ENCODE measurements at regions of chr2 and their contacts with region 1.

Region 1: DNA sequence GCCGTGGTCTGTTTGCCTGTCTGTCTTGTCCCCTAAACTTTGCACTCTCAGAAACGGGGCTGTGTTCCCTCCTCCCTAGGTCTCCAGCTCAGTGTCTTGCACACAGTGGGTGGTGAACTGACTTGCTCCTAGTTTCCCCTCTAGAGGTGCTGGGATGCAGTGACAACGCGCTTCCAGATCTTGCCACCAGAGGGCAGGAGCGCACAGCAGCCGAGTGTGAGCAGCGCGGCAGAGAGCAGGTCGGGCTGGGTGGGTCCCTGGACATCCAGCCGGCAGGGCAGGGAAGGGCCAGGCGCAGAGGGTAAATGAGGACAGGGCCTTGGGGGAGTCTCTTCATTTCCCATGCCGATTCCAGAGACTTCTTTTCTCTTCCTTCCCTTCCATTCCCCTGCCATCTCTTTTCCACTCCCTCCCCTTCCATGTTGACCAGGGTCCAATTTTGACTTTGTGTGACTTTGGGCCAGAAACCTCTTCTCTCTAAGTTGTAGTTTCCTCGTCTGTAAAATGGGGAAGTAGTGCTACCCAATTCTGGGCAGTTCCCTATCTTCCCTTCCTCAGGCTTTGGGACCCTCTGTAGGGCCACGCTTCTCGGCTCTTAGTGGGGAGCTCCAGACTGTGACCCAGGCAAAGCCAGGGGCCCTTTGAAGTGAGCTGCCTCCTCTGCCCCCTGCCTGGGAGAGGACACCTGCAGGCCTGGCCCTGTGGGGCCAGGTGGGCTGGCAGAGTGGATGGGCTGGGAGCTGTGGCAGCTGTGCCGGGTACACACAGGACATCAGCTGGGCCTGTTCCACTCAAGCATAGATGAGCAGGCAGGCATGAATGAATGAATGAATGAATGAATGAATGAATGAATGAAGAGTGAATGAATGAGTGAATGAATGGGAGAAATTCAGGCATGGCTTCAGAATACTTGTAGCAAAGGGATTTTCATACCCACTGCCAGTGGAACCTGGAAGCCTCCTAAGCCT is 43.3 kb upstream of the TAF1B start:
- DNase-seq: peak; percentile 96
- ATAC-seq: peak; percentile 90
- H3K4me3 Mint-ChIP-seq: no peak overlapping the region
- H3K27ac Mint-ChIP-seq: peak overlapping the region; percentile 88; the same call in 1 of the 2 replicates
- H3K4me1 Mint-ChIP-seq: peaks cover 19% of the 10 kb centered on the region
- H3K27me3 Mint-ChIP-seq: no peaks in the 10 kb centered on the region
- CTCF ChIP-seq: peak; percentile 83

Region 2: GRCh38 chr2:9778012-9778411 is 21.9 kb before region 1 on chr2:
- CTCF ChIA-PET with region 1: interaction called, 130 read pairs
- POLR2A ChIA-PET with region 1: no interaction called
- DNase-seq: peak; percentile 51
- ATAC-seq: peak; percentile 83
- H3K4me3 Mint-ChIP-seq: no peak overlapping the region
- H3K27ac Mint-ChIP-seq: no peak overlapping the region
- H3K4me1 Mint-ChIP-seq: peaks cover 4% of the 10 kb centered on the region; the same call in 1 of the 2 replicates
- H3K27me3 Mint-ChIP-seq: no peaks in the 10 kb centered on the region; the same call in 1 of the 2 replicates
- CTCF ChIP-seq: peak; percentile 29; the same call in 1 of the 2 replicates

Region 3: GRCh38 chr2:9843229-9844035 is 43.5 kb after region 1 on chr2 and contains the start of gene TAF1B:
- CTCF ChIA-PET with region 1: interaction called, 13 read pairs
- POLR2A ChIA-PET with region 1: no interaction called
- DNase-seq: peak; percentile 90
- ATAC-seq: peak; percentile 92
- H3K4me3 Mint-ChIP-seq: peak within 1 kb of the TSS; percentile 86
- H3K27ac Mint-ChIP-seq: peak within 1 kb of the TSS; percentile 96
- H3K4me1 Mint-ChIP-seq: peaks cover 19% of the 10 kb centered on the region
- H3K27me3 Mint-ChIP-seq: peaks cover 4% of the 10 kb centered on the region; the same call in 1 of the 2 replicates
- CTCF ChIP-seq: no peak
- total RNA-seq, gene TAF1B: 27.0 to 31.2 TPM (median 28.8 TPM) in 3 replicates

Region 4: GRCh38 chr2:10057231-10058107 is 257.5 kb after region 1 on chr2:
- CTCF ChIA-PET with region 1: interaction called, 12 read pairs
- POLR2A ChIA-PET with region 1: no interaction called
- DNase-seq: peak; percentile 92
- ATAC-seq: peak; percentile 94
- H3K4me3 Mint-ChIP-seq: peak overlapping the region; percentile 85
- H3K27ac Mint-ChIP-seq: peak overlapping the region; percentile 98
- H3K4me1 Mint-ChIP-seq: peaks cover 28% of the 10 kb centered on the region
- H3K27me3 Mint-ChIP-seq: no peaks in the 10 kb centered on the region
- CTCF ChIP-seq: no peak

Measured in WTC11 (cell line).